CD14-positive monocyte (primary cell): ENCODE measurements at regions of chr11 and their contacts with region 1.

Region 1: DNA sequence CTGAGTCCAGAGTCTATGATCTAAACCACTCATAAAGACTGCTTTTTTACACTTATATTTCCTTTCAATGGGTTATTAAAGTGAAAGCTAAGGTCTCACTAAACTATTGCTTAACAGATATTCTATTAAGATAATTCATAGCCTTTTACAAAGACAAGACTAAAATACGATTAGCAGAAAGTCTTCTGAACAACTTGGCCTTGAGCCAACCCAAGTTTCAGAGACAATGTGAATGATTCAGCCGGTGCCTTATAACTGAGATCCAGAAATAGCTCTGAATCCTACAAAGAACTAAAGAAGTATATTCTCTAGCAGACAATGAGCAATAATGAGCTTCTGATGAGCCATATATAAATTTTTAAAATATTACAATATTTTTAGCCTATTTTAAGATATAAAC is 41.5 kb upstream of the CARD18 start:
- DNase-seq: peak; percentile 89 to 94 (median 90)
- H3K4me3 ChIP-seq: peak overlapping the region in 1 of 3 experiments; percentile 35
- H3K4me3 Mint-ChIP-seq: peak overlapping the region in 1 of 2 donors; percentile 42
- H3K27ac ChIP-seq: peak overlapping the region; percentile 81 to 88
- H3K27ac Mint-ChIP-seq: peak overlapping the region; percentile 85 to 94 (median 90)
- H3K4me1 ChIP-seq: peaks cover 36 to 51% of the 10 kb centered on the region in 2 donors
- H3K4me1 Mint-ChIP-seq: peaks cover 32% of the 10 kb centered on the region
- H3K27me3 ChIP-seq: no peaks in the 10 kb centered on the region
- H3K27me3 Mint-ChIP-seq: peaks cover 0 to 3% (median 0%) of the 10 kb centered on the region in 3 donors
- CTCF ChIP-seq: no peak

Region 2: DNA sequence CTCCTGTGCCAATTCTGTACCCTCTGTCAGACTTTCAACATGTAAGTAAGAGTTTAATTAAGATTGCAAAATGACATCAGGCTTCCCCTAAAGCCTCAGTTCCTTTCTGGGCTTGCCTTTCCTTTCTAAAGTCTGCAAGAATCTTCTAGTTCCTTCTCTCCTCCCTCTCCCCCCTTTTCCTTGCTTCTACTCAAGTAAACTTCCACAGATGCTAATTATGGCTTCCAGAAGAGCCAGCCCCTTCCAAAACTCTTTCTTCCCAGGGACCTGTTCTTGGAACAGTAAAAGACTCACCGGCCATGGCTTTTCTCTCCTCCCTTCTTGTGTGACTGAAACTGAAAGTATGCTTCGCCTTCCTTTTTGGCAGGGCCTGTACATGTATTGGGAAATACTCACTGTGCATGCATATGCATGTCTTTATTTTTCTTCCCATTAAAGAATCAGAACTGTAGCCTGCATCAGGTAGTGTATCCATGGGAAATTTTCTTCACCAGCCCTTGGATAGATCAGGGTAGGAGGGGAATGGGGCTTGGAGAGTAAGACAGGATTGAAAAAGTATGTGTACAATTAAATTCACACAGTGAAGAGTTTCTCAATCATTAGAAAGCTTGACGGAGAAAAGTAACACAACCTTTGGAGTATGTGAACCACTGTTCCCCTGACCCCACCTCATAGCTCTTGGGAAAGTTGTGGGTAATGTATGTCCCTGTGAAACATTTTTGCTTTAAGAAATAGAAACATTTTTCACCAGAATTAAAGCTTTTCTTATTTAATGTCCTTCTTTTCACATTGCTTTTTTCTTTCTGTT is 146.1 kb before region 1 on chr11 and contains the start of gene CASP1:
- intact Hi-C with region 1: loop called (anchors 10 kb)
- DNase-seq: peak; percentile 59 to 83 (median 76)
- H3K4me3 ChIP-seq: peak within 1 kb of the TSS; percentile 59 to 99 (median 81)
- H3K4me3 Mint-ChIP-seq: peak within 1 kb of the TSS; percentile 98 to 99
- H3K27ac ChIP-seq: peak within 1 kb of the TSS; percentile 69 to 89
- H3K27ac Mint-ChIP-seq: peak within 1 kb of the TSS; percentile 89 to 100 (median 99)
- H3K4me1 ChIP-seq: peaks cover 40 to 74% of the 10 kb centered on the region in 2 donors
- H3K4me1 Mint-ChIP-seq: peaks cover 64% of the 10 kb centered on the region
- H3K27me3 ChIP-seq: no peaks in the 10 kb centered on the region
- H3K27me3 Mint-ChIP-seq: peaks cover 0 to 1% (median 0%) of the 10 kb centered on the region in 3 donors
- CTCF ChIP-seq: no peak
- polyA plus RNA-seq, gene CASP1: 210 to 460 (median 433) TPM

Region 3: GRCh38 chr11:105044921-105045524 is 136.1 kb before region 1 on chr11 and contains the start of gene CARD16:
- intact Hi-C with region 1: loop called in 1 of 2 experiments (anchors 10 kb)
- DNase-seq: peak; percentile 69 to 92 (median 71)
- H3K4me3 ChIP-seq: peak within 1 kb of the TSS; percentile 49 to 97 (median 94)
- H3K4me3 Mint-ChIP-seq: peak within 1 kb of the TSS; percentile 95 to 99
- H3K27ac ChIP-seq: peak within 1 kb of the TSS; percentile 60 to 92
- H3K27ac Mint-ChIP-seq: peak within 1 kb of the TSS; percentile 96 to 100 (median 97)
- H3K4me1 ChIP-seq: peaks cover 35 to 61% of the 10 kb centered on the region in 2 donors
- H3K4me1 Mint-ChIP-seq: peaks cover 40% of the 10 kb centered on the region
- H3K27me3 ChIP-seq: no peaks in the 10 kb centered on the region
- H3K27me3 Mint-ChIP-seq: no peaks in the 10 kb centered on the region
- CTCF ChIP-seq: no peak
- polyA plus RNA-seq, gene CARD16: 294 to 731 (median 671) TPM

Region 4: DNA sequence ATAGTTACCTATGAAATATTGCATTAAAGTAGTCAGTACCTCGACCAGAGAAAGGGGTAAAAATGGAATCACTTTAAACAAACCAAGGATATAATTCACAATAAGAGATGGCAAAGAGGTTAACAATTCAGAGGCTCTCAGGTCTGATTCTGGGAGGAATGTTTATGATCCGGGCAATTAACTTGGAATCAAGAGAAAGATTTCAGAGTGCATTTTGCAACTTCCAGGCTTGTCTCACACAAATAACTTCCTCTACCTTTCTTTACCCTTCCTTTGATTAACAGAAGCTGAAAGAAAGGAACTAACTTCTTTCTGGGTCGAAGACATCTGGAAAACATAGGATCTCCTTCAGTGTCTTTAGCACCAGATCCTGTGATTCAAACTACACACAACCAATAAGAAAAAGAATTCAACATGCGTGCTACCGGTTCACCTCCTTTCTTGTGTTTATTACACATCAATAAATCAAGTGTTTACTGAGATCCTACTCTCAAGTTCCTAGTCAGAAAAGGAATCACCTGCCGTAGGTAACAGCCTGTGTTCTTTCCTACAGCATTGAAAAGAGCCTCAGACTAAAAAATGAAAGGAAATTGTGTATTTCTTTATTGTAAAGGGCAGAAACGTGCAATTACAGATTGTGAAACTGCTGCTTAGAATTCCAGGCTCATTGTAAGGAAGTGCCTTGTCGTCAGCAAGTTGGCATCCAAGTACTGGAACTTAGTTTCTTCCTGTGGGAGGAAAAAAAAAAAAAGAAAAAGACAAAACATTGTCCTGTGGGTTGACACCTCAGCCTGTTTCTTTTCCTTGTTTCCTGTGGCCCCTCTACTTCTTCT is 71.0 kb before region 1 on chr11:
- intact Hi-C with region 1: loop called in 1 of 2 experiments (anchors 10 kb)
- DNase-seq: peak in 2 of 3 donors; percentile 19 to 41
- H3K4me3 ChIP-seq: peak overlapping the region; percentile 15 to 62 (median 16)
- H3K4me3 Mint-ChIP-seq: peak overlapping the region; percentile 4 to 77
- H3K27ac ChIP-seq: peak overlapping the region in 1 of 2 donors; percentile 67
- H3K27ac Mint-ChIP-seq: peak overlapping the region; percentile 46 to 88 (median 70)
- H3K4me1 ChIP-seq: peaks cover 18 to 20% of the 10 kb centered on the region in 2 donors
- H3K4me1 Mint-ChIP-seq: peaks cover 29% of the 10 kb centered on the region
- H3K27me3 ChIP-seq: no peaks in the 10 kb centered on the region
- H3K27me3 Mint-ChIP-seq: peaks cover 0 to 4% (median 3%) of the 10 kb centered on the region in 3 donors
- CTCF ChIP-seq: no peak

Region 5: DNA sequence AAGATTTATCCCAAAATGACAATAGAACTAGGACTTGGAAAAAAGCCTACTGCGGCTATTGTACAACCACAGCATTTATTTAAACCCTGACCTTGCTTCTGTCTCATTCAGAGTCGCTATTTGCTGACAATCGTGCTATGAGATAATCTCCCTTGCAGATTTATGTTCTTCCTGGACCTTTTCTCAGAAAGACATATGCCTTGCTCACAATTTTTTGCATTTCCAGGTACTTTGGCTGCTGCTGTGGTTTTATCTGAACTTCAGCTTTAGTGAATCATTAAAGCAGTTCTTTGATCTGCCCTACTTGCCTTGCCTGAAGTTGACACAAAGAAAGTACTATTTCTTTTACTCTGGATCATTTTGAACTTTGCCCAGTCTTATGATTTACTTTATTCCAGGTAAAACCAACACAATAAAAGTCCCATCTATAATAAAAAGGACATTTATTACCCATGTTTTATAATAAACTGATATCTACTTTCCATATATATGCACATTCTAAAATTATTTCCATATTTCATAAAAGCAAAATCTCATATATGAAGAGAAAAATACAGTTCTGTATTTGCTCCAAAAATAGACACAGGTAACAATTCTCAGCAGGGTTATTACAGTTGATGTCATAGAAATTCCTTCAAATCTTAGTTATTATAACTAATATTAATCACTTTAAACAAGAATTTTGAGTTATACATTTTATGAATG is 21.9 kb after region 1 on chr11:
- intact Hi-C with region 1: no loop called
- DNase-seq: no peak
- H3K4me3 ChIP-seq: no peak overlapping the region
- H3K4me3 Mint-ChIP-seq: no peak overlapping the region
- H3K27ac ChIP-seq: no peak overlapping the region
- H3K27ac Mint-ChIP-seq: no peak overlapping the region
- H3K4me1 ChIP-seq: peaks cover 14 to 23% of the 10 kb centered on the region in 2 donors
- H3K4me1 Mint-ChIP-seq: peaks cover 14% of the 10 kb centered on the region
- H3K27me3 ChIP-seq: no peaks in the 10 kb centered on the region
- H3K27me3 Mint-ChIP-seq: no peaks in the 10 kb centered on the region
- CTCF ChIP-seq: no peak

Region 6: DNA sequence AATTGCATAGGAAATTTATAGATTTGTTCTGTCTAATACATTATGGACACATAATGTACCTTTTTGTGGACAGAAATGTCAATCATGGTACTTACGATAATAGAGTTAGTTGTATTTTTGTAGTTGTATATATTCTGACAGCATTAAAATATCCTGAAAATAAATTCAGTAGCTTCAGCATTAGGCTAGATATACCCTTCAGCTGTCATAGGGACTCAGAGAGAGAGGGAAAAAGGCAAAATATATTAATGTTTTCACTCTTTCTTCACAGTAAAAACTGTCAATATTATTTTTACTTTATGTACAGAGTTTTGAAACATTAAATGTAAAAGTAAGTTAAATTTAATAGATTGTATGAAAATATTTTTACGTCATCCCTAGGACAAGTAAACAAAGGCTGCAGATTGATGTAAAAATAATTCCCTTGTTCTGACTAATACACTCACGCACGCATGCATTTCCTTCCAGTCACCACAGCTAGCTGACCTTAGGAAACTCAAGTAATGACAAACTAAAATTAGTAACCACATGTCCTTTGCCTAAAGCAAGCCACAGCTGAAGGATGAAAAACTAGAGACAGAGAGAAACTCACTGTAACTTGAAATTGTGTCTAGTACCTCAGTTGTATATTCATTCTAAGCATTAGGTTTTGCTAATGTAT is 63.2 kb after region 1 on chr11:
- intact Hi-C with region 1: loop called in 1 of 2 experiments (anchors 10 kb)
- DNase-seq: peak; percentile 82 to 96 (median 93)
- H3K4me3 ChIP-seq: no peak overlapping the region
- H3K4me3 Mint-ChIP-seq: no peak overlapping the region
- H3K27ac ChIP-seq: peak overlapping the region in 1 of 2 donors; percentile 80
- H3K27ac Mint-ChIP-seq: peak overlapping the region; percentile 36 to 95 (median 82)
- H3K4me1 ChIP-seq: peaks cover 11 to 14% of the 10 kb centered on the region in 2 donors
- H3K4me1 Mint-ChIP-seq: peaks cover 5% of the 10 kb centered on the region
- H3K27me3 ChIP-seq: no peaks in the 10 kb centered on the region
- H3K27me3 Mint-ChIP-seq: no peaks in the 10 kb centered on the region
- CTCF ChIP-seq: no peak

Region 7: GRCh38 chr11:105334025-105334710 is 153.1 kb after region 1 on chr11:
- intact Hi-C with region 1: no loop called
- DNase-seq: no peak
- H3K4me3 ChIP-seq: no peak overlapping the region
- H3K4me3 Mint-ChIP-seq: no peak overlapping the region
- H3K27ac ChIP-seq: no peak overlapping the region
- H3K27ac Mint-ChIP-seq: peak overlapping the region in 1 of 7 donors; percentile 1
- H3K4me1 ChIP-seq: no peaks in the 10 kb centered on the region
- H3K4me1 Mint-ChIP-seq: no peaks in the 10 kb centered on the region
- H3K27me3 ChIP-seq: no peaks in the 10 kb centered on the region
- H3K27me3 Mint-ChIP-seq: no peaks in the 10 kb centered on the region
- CTCF ChIP-seq: no peak